ENCODE measurements at regions of chr2 and their contacts with region 1.

Region 1: GRCh38 chr2:20097879-20098714 is 46.7 kb upstream of the LAPTM4A start:
- DNase-seq: peak; percentile 87
- H3K4me3 Mint-ChIP-seq: no peak overlapping the region
- H3K27ac Mint-ChIP-seq: no peak overlapping the region
- H3K4me1 Mint-ChIP-seq: peaks cover 2% of the 10 kb centered on the region
- H3K27me3 Mint-ChIP-seq: peaks cover 1% of the 10 kb centered on the region

Region 2: DNA sequence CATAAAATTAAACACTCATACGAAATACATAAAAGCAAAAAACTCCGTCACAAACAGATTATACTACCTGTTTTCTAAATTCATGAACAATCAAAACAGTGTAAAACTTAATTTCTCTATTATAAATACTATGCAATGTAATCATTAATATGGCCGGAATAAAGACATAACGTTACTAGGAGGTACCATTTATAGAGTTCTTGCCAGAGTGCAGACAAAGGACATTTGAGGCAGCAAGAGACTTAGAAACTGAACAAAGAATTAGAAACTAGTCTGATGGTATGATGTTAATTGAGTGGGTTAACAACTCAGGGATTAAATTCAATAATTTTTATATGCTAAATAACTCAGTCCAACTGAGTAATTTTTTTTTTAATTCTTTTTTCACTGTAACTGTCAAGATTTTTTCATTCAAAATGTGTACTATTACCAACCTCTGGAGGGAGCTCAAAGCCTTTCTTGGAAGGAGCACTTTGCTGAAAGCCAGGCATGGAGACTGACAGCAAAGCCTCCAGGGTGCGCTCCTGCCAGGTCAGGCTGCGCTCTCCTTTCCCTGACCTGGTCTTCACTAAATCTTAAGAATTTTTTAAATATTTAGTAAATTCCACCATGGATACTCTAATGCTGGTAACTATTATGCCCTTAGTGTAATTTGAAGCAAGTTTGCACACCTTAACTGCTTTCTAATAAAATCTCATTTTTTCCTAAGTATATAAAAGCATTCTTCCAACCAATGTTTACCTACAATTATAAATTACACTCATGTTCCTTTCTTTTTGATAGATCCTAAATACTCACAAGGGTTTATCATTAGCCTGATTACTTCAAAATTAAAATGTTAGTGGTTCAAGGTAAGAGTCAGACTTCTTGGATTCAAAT is 142.3 kb before region 1 on chr2:
- CTCF ChIA-PET with region 1: interaction called, 4 read pairs
- POLR2A ChIA-PET with region 1: no interaction called
- intact Hi-C with region 1: loop called (anchors 1 kb)
- DNase-seq: peak; percentile 51
- H3K4me3 Mint-ChIP-seq: no peak overlapping the region
- H3K27ac Mint-ChIP-seq: no peak overlapping the region
- H3K4me1 Mint-ChIP-seq: no peaks in the 10 kb centered on the region
- H3K27me3 Mint-ChIP-seq: no peaks in the 10 kb centered on the region

Measured in activated CD4-positive, alpha-beta memory T cell treated with anti-CD3 and anti-CD28 coated beads for 36 hours (primary cell).